ENCODE measurements at regions of chr1 and their contacts with region 1.

Region 1: DNA sequence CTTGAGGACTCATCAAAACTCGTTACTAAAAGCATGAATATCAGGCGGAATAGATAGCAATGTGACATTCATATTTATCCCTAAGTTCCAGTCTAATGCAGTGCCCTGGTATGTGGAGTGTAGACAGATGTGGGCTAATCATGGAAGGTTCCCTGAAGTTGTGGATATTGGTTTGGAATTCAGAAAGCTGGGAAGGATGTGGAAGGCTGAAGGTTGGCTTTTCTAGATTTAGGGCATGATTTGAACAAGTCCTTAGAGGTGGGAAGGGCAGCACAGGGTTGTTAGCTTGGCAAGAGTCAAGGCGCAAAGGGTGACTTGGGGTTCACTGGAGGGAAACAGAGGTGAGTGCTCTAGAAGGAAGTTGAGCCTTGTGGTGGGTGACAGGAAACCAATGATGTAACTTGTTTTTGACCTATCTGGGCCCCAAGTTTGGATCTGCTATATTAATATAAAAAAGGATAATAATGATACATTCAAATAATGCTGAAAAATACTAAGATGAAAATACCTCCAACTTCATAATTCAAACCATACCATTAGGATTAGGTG is 21.9 kb downstream of the LGALS8 start:
- DNase-seq: no peak
- H3K4me3 ChIP-seq: no peak overlapping the region
- H3K27ac ChIP-seq: no peak overlapping the region
- H3K4me1 ChIP-seq: no peaks in the 10 kb centered on the region
- H3K27me3 ChIP-seq: no peaks in the 10 kb centered on the region
- CTCF ChIP-seq: no peak
- POLR2A ChIP-seq: no peak

Region 2: DNA sequence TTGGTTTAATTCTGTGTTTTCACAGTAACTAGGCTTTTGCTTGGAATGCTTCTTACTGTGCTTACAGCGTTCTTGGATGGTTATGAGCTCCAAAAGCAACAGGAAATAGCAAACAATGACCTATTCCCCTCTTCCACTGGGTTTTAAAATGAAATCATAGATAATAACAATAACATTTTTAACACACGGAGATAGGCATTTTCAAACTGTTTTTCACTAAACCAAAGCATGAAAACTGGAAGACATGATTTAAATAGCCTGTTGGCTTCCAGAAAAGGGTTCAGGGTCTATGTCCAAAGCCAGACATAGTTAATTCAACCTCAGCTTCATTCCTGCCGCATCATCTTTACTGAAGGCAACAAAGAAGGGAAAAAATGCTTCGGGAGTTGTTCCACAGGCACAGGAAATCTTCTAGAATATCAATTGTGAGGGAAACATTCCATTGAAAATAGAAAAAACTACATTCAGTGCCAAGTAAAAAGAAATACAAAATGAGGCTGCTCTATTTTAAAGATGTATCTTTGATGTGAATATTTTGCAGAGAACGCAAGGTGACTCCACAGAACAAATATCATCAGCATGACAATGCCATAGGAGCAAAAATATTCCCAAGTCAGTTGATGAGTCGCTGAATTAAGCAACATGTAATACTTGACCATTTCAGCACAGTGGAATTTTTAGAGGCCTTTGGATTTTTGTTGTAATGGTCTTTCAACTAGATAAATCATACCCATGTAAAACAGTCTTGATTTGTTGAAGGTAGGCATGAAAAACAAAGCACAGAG is 561.5 kb before region 1 on chr1:
- CTCF ChIA-PET with region 1: no interaction called
- POLR2A ChIA-PET with region 1: no interaction called
- dilution Hi-C with region 1: no loop called
- intact Hi-C with region 1: no loop called
- DNase-seq: peak; percentile 92
- H3K4me3 ChIP-seq: peak overlapping the region in 1 of 3 experiments; percentile 29
- H3K27ac ChIP-seq: peak overlapping the region; percentile 96
- H3K4me1 ChIP-seq: peaks cover 47% of the 10 kb centered on the region
- H3K27me3 ChIP-seq: no peaks in the 10 kb centered on the region
- CTCF ChIP-seq: no peak
- POLR2A ChIP-seq: no peak

Region 3: GRCh38 chr1:236394905-236395780 is 150.6 kb before region 1 on chr1:
- CTCF ChIA-PET with region 1: no interaction called
- POLR2A ChIA-PET with region 1: no interaction called
- dilution Hi-C with region 1: no loop called
- intact Hi-C with region 1: no loop called
- DNase-seq: peak; percentile 5
- H3K4me3 ChIP-seq: peak overlapping the region; percentile 12 to 50 (median 19)
- H3K27ac ChIP-seq: no peak overlapping the region
- H3K4me1 ChIP-seq: peaks cover 3% of the 10 kb centered on the region
- H3K27me3 ChIP-seq: peaks cover 21 to 30% of the 10 kb centered on the region in 2 experiments
- CTCF ChIP-seq: no peak
- POLR2A ChIP-seq: no peak

Region 4: GRCh38 chr1:236581528-236581927 is 35.8 kb after region 1 on chr1:
- CTCF ChIA-PET with region 1: no interaction called
- POLR2A ChIA-PET with region 1: no interaction called
- dilution Hi-C with region 1: no loop called
- intact Hi-C with region 1: loop called (anchors 5 kb)
- DNase-seq: no peak
- H3K4me3 ChIP-seq: no peak overlapping the region
- H3K27ac ChIP-seq: no peak overlapping the region
- H3K4me1 ChIP-seq: no peaks in the 10 kb centered on the region
- H3K27me3 ChIP-seq: no peaks in the 10 kb centered on the region
- CTCF ChIP-seq: no peak
- POLR2A ChIP-seq: no peak

Measured in endothelial cell of umbilical vein (primary cell).